ENCODE measurements at regions of chr10 and their contacts with region 1.

Region 1: DNA sequence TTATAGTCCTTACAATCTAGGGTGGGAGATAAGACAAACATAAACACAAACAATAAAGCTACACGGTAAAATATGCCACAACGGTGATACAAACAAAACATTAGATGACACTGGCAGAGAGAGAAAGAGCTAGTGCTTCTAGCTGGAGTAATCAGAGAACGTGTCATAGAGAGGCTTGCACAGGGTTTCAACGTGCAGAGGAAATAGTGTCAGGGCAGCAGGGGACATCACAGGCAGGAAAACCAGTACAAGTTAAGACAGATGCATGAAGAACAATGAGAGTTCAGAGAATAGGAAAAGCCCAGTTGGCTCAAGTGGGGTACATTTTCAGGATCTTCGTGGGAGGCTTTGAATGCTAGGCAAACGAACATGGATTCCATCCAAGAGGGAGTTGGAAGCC is 91.4 kb downstream of the ZNF438 start:
- DNase-seq: no peak
- ATAC-seq: no peak
- H3K4me3 ChIP-seq: no peak overlapping the region
- H3K27ac ChIP-seq: no peak overlapping the region
- H3K4me1 ChIP-seq: no peaks in the 10 kb centered on the region
- H3K27me3 ChIP-seq: no peaks in the 10 kb centered on the region
- CTCF ChIP-seq: no peak
- POLR2A ChIP-seq: no peak
- RAD21 ChIP-seq: no peak

Region 2: DNA sequence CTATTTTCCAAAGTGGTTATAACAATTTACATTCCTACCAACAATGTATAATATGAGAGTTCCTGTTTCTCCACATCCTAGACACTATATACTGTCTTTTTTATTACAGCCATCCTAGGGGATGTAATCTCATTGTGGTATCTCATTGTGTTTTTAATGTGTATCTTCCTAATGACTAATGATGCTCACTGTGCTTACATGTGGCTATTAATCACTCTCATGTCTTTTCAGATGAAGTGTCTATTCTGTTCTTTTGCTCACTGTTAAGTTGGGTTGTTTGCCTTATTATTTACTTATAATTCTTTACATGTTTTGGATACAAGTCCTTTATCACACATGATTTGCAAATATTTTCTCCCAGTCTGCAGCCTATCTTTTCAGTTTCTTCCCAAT is 19.6 kb after region 1 on chr10:
- CTCF ChIA-PET with region 1: no interaction called
- POLR2A ChIA-PET with region 1: no interaction called
- RAD21 ChIA-PET with region 1: no interaction called
- intact Hi-C with region 1: loop called (anchors 2 kb)
- DNase-seq: no peak
- ATAC-seq: no peak
- H3K4me3 ChIP-seq: no peak overlapping the region
- H3K27ac ChIP-seq: no peak overlapping the region
- H3K4me1 ChIP-seq: no peaks in the 10 kb centered on the region
- H3K27me3 ChIP-seq: no peaks in the 10 kb centered on the region
- CTCF ChIP-seq: no peak
- POLR2A ChIP-seq: no peak
- RAD21 ChIP-seq: no peak

Region 3: DNA sequence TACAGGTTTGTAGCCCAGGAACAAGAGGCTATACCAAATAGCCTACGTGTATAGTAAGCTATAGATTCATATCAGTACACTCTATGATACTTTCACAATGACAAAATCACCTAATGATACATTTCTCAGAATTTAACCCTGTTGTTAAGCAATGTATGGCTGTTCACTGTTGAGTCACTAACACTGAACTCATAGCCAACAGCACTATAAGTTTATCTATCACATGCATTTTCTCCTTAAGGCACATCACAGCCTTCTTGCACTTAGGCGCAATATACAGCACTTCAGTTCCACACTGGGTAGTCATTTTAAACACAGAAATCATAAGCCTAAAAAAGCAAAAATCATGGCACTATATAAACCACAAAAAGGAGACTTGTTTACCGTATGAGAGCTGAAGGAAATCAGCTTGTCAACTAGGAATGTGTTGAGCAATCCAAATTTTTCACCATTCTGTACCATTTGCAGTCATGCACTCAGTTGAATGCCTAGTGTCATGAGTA is 45.8 kb after region 1 on chr10:
- CTCF ChIA-PET with region 1: no interaction called
- POLR2A ChIA-PET with region 1: no interaction called
- RAD21 ChIA-PET with region 1: no interaction called
- intact Hi-C with region 1: no loop called
- DNase-seq: no peak
- ATAC-seq: no peak
- H3K4me3 ChIP-seq: no peak overlapping the region
- H3K27ac ChIP-seq: no peak overlapping the region
- H3K4me1 ChIP-seq: peaks cover 0 to 18% of the 10 kb centered on the region in 2 experiments; a peak in 2 of 4 replicates
- H3K27me3 ChIP-seq: no peaks in the 10 kb centered on the region
- CTCF ChIP-seq: no peak
- POLR2A ChIP-seq: no peak
- RAD21 ChIP-seq: no peak

Measured in HCT116 (cell line).